ENCODE measurements at regions of chr2 and their contacts with region 1.

Region 1: DNA sequence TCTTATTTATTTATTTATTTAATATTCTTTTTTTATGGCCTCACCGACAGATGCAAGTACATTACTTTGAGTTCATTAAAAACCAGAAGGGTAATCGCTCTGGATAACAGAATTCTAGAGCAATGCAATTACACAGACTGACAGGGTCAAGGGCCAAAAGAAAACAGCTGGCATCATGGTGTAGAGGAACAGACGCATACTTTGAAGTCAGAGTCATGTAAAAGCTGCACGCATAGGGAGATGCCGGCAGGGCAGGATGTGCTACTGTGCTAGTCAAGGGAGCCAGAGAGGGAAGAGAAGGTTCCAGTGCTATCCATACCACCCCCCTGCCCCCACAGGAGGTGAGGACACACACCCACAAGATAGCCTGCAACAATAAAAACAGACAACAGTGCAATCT is 115.2 kb upstream of the TFCP2L1 start:
- DNase-seq: no peak
- H3K4me3 ChIP-seq: no peak overlapping the region
- H3K27ac ChIP-seq: no peak overlapping the region
- H3K4me1 ChIP-seq: no peaks in the 10 kb centered on the region
- H3K27me3 ChIP-seq: no peaks in the 10 kb centered on the region
- CTCF ChIP-seq: no peak
- POLR2A ChIP-seq: no peak

Region 2: DNA sequence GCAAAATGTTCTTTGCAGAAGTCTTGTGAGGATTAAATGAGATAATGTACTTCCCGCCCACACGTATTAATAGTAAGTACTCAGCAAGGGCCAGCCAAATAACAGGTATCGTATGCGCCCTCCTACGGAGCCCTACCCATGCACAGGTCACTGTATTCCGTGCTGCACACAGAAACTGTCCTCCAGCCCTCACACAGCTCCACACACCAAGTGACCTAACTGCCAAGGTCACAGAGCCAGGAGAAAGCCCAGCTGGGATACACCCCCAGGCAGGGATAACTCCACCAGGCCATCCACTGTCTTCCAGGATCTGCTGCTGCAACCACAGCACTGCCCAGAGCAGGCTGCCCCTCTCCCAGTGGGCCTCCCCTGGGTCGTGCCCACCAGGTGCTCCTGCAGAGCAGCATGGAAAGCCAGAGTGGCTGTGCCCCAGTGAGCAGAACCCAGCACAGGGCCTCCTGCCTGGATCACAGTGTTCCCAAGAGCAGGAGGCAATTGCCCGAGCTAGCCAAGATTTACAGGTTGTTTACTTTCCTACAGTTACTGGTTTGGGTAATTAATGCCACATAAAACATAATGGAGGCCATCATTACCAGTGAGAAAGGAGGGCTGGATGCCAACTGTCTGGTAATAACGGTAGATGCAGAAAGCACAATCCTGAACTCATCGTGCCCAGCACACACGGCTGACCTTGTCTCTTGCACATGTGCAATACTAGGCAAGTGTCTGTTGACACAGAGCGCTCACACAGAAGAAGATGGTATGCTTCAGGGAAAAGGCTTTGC is 139.6 kb before region 1 on chr2:
- intact Hi-C with region 1: no loop called
- DNase-seq: peak in 1 of 7 donors; percentile 62
- H3K4me3 ChIP-seq: no peak overlapping the region
- H3K27ac ChIP-seq: no peak overlapping the region
- H3K4me1 ChIP-seq: no peaks in the 10 kb centered on the region
- H3K27me3 ChIP-seq: no peaks in the 10 kb centered on the region
- CTCF ChIP-seq: no peak
- POLR2A ChIP-seq: no peak

Region 3: DNA sequence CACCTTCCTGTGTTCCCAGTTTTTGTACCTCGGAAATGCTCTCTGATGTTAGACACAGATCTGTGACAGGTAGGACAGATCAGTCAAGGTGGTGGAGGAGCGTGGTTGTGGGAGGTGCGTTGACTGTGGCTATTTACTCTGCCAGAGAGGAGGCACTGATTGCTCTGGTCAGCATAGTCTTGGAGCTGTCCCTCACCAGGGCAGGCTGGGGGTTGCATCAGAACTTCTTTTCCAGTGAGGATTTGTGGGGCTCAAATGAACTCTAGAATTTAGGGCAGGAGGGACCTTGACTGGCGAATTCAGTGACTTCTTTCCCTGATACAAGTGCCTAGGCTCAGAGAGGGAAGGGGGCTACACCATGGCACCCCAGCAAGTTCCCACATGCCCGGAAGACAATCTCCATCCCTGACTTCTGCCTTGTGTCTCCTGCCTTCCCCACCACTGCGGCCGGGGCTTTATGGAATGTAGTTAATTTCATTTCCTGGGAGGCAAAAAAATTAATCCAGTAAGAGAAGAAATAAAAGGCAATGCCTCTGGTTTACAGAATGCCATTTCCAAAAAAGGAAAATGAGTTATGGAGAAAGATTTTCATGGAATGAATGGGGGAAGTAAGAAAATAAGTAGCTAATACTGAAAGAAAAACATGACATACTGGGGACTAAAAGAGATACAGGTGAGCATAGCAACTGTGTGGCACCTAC is 310.4 kb after region 1 on chr2:
- intact Hi-C with region 1: loop called in 1 of 2 experiments (anchors 10 kb)
- DNase-seq: no peak
- H3K4me3 ChIP-seq: no peak overlapping the region
- H3K27ac ChIP-seq: no peak overlapping the region
- H3K4me1 ChIP-seq: no peaks in the 10 kb centered on the region
- H3K27me3 ChIP-seq: no peaks in the 10 kb centered on the region
- CTCF ChIP-seq: no peak
- POLR2A ChIP-seq: no peak

Region 4: GRCh38 chr2:121722479-121722878 is 322.3 kb after region 1 on chr2:
- intact Hi-C with region 1: loop called (anchors 2 to 10 kb)
- DNase-seq: peak in 4 of 7 donors; percentile 29 to 42 (median 40)
- H3K4me3 ChIP-seq: no peak overlapping the region
- H3K27ac ChIP-seq: peak overlapping the region in 2 of 5 donors; percentile 24 to 35
- H3K4me1 ChIP-seq: peaks cover 8 to 11% of the 10 kb centered on the region in 2 donors
- H3K27me3 ChIP-seq: no peaks in the 10 kb centered on the region
- CTCF ChIP-seq: no peak
- POLR2A ChIP-seq: no peak